ENCODE measurements at regions of chrX and their contacts with region 1.

Region 1: DNA sequence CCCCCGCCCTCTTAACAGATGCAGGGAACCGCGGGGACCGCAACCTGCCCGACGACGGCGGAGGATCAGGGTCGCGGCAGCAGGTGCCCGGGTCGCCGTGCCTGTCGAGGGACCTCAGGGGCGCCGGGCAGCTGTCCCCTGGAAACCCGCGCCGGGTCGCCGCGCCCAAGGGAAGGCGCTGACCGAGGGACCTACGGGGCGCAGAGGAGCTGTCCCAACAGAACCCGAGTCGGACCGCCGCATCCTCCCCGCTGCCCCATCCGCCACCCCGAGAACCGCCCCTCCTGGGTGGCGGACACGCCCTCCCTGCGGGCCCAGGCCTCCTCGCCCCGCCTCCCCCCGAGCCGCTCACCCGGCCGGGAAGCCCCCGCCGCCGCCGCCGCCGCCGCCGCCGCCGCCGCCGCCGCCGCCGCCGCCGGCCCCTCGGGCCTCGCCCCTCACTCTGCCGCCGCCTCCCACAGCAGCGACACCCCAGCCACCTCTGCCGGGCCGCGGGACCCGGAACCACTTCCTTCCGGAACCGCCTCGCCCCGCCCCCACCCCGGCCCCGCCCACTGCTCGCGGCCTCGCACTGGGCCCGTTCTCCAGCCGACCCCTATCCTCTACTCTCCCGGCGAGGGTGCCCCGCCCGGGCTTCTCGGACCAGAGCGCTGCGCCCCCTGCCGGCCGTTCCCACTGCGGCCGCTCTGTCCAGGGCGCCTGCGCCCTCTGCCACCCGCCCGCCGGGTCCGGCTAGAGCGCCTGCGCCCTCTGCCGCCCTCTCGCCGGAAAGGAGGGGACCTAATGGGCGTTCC is at the start of gene BCLAF3:
- DNase-seq: peak; percentile 76
- H3K4me3 ChIP-seq: peak within 1 kb of the TSS; percentile 60 to 74 (median 65)
- H3K27ac ChIP-seq: no peak within 1 kb of the TSS
- H3K4me1 ChIP-seq: peaks cover 3% of the 10 kb centered on the region
- H3K27me3 ChIP-seq: no peaks in the 10 kb centered on the region
- CTCF ChIP-seq: peak; percentile 65 to 80
- POLR2A ChIP-seq: no peak
- total RNA-seq, gene BCLAF3: 5.0 and 5.1 TPM in 2 replicates

Region 2: GRCh38 chrX:19225924-19226323 is 764.8 kb before region 1 on chrX:
- CTCF ChIA-PET with region 1: no interaction called
- POLR2A ChIA-PET with region 1: no interaction called
- dilution Hi-C with region 1: no loop called
- intact Hi-C with region 1: no loop called
- DNase-seq: no peak
- H3K4me3 ChIP-seq: no peak overlapping the region
- H3K27ac ChIP-seq: no peak overlapping the region
- H3K4me1 ChIP-seq: no peaks in the 10 kb centered on the region
- H3K27me3 ChIP-seq: no peaks in the 10 kb centered on the region
- CTCF ChIP-seq: no peak
- POLR2A ChIP-seq: no peak

Region 3: GRCh38 chrX:19544693-19545305 is 446.0 kb before region 1 on chrX:
- CTCF ChIA-PET with region 1: no interaction called
- POLR2A ChIA-PET with region 1: no interaction called
- dilution Hi-C with region 1: no loop called
- intact Hi-C with region 1: loop called (anchors 1 kb)
- DNase-seq: peak; percentile 43
- H3K4me3 ChIP-seq: no peak overlapping the region
- H3K27ac ChIP-seq: no peak overlapping the region
- H3K4me1 ChIP-seq: no peaks in the 10 kb centered on the region
- H3K27me3 ChIP-seq: no peaks in the 10 kb centered on the region
- CTCF ChIP-seq: peak; percentile 47 to 58
- POLR2A ChIP-seq: no peak

Region 4: GRCh38 chrX:19739683-19740082 is 251.1 kb before region 1 on chrX:
- CTCF ChIA-PET with region 1: no interaction called
- POLR2A ChIA-PET with region 1: no interaction called
- dilution Hi-C with region 1: no loop called
- intact Hi-C with region 1: loop called (anchors 2 kb)
- DNase-seq: peak; percentile 64
- H3K4me3 ChIP-seq: no peak overlapping the region
- H3K27ac ChIP-seq: no peak overlapping the region
- H3K4me1 ChIP-seq: peaks cover 9% of the 10 kb centered on the region
- H3K27me3 ChIP-seq: no peaks in the 10 kb centered on the region
- CTCF ChIP-seq: peak; percentile 57 to 64
- POLR2A ChIP-seq: no peak

Region 5: DNA sequence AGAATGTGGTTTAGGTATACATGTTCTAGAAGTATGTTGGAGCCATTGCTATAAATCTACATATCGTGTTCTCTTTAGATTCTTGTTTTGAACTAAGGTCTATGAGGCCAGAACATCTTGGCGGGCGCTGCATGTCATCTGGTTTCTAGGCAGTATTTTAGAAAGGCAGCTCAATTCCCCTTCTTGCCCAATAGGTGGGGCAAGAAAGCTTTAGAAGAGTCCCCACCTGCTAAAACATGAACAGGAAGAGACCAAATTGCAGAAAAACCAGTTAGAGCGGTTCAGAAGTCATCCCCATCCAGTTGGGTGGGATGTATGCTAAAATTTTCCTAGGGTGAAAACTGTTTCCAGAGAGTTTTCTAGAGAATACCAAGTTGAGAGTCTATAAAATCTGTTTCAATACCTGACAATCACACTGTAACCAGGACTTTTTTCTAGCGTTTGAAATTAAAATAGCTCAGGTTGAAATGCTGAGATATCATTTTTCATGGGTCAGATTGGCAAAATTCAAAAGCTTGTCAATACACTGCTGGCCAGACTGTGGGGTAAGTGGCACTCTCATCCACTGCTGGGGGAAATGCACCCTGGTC is 85.9 kb before region 1 on chrX:
- CTCF ChIA-PET with region 1: interaction called, 11 read pairs
- POLR2A ChIA-PET with region 1: no interaction called
- dilution Hi-C with region 1: no loop called
- intact Hi-C with region 1: loop called (anchors 1 kb)
- DNase-seq: peak; percentile 24
- H3K4me3 ChIP-seq: no peak overlapping the region
- H3K27ac ChIP-seq: no peak overlapping the region
- H3K4me1 ChIP-seq: no peaks in the 10 kb centered on the region
- H3K27me3 ChIP-seq: no peaks in the 10 kb centered on the region
- CTCF ChIP-seq: peak; percentile 34 to 54
- POLR2A ChIP-seq: no peak

Region 6: DNA sequence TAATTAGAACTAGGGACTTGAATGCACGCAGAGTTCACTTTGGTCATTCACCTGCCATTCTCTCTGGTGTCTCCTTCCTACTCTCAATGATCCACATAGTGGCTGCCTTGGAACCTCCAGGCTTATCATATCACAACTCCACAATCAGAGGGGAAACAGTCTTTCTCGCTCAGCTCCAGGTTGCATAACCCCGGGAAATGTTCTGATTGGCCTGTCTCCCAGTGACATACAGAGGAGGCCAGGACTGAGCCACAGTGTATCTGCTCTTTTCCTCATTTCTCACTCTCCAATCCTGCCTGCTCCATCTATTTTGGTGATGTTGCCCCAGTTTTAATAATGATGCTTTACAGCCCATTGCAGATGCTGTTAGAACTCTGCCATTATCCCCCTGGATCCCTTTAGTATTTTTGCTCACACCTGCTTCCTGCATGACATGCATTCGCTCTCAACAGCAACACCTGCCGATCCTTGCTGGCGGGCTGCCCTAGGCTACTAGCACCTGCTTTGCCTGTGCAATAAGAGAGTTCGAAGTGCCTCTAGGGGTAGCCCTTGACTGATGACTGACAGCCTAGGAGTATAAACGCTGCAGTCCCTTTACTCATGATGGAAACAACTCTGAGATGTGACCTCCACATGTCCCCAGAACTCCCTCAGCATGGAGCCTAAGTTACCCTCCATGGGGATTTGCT is 487.2 kb after region 1 on chrX:
- CTCF ChIA-PET with region 1: no interaction called
- POLR2A ChIA-PET with region 1: no interaction called
- dilution Hi-C with region 1: no loop called
- intact Hi-C with region 1: no loop called
- DNase-seq: no peak
- H3K4me3 ChIP-seq: no peak overlapping the region
- H3K27ac ChIP-seq: no peak overlapping the region
- H3K4me1 ChIP-seq: no peaks in the 10 kb centered on the region
- H3K27me3 ChIP-seq: no peaks in the 10 kb centered on the region
- CTCF ChIP-seq: no peak
- POLR2A ChIP-seq: no peak

Measured in endothelial cell of umbilical vein (primary cell).